Tibial artery (tissue), 4 donors: ENCODE measurements at regions of chr7 and their contacts with region 1.

Region 1: DNA sequence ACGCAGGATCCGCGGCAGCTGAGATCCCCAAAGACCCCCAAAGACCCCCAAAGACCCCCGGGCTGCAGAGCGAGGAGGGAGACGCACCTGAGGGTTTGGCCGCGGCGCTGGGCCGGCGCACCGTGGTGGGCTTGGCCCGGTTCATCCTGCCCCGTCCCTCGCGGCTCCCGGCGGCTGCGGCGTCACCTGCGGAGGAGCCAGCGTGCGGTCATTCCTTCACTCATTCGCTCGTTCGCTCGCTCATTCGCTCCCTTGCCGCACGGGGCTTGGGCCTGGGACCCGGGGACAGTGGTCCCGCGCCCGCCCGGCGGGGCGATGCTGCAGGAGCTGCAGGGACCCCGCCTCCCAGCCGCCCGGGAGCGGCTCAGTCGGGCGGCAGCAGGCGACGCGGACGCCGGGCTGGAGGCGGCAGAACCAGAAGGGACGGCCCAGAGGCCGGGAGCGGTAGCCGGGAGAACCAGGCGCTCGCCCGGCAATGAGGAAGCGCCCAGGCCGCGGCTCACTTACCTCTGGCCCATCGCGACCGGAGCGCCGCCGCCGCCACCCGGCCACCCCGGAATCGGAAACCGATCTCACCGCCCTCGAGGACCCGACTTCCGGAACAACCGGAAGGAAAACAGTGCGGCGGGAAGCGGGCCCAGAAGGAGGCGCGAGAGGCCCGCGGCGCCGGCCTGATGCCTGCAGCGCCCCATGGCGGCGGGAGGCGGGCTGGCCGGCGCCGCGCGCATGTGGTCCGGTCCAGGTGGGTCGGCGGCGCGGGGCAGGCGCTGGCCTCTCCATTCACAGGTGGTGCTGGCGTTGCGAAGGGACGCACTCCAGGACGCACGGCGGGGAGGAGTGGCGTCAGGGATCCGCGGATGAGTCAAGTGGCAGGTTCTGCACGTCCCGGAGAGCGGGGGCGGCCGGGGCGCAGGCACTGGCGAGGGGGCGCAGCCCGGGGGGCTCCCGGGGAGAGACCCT is at the start of gene INTS1:
- DNase-seq: peak; percentile 90 to 94
- H3K4me3 ChIP-seq: peak within 1 kb of the TSS; percentile 87 to 95
- H3K27ac ChIP-seq: peak within 1 kb of the TSS; percentile 74 to 75
- H3K4me1 ChIP-seq: peaks cover 0 to 39% (median 25%) of the 10 kb centered on the region in 4 donors
- H3K27me3 ChIP-seq: no peaks in the 10 kb centered on the region
- CTCF ChIP-seq: peak; percentile 86 to 94

Region 2: GRCh38 chr7:1537535-1538412 is 33.7 kb after region 1 on chr7:
- intact Hi-C with region 1: loop called (anchors 2 kb)
- DNase-seq: peak; percentile 95 to 99
- H3K4me3 ChIP-seq: peak overlapping the region; percentile 62 to 76
- H3K27ac ChIP-seq: peak overlapping the region; percentile 99 to 100
- H3K4me1 ChIP-seq: peaks cover 21 to 69% (median 54%) of the 10 kb centered on the region in 4 donors
- H3K27me3 ChIP-seq: no peaks in the 10 kb centered on the region
- CTCF ChIP-seq: no peak

Region 3: GRCh38 chr7:1569833-1570633 is 65.9 kb after region 1 on chr7 and contains the start of gene PSMG3:
- intact Hi-C with region 1: loop called (anchors 2 kb)
- DNase-seq: peak; percentile 88 to 94
- H3K4me3 ChIP-seq: peak within 1 kb of the TSS; percentile 79 to 88
- H3K27ac ChIP-seq: peak within 1 kb of the TSS; percentile 87 to 94
- H3K4me1 ChIP-seq: peaks cover 0 to 33% (median 22%) of the 10 kb centered on the region in 4 donors
- H3K27me3 ChIP-seq: no peaks in the 10 kb centered on the region
- CTCF ChIP-seq: peak; percentile 29 to 31

Region 4: GRCh38 chr7:1662101-1662500 is 158.0 kb after region 1 on chr7:
- intact Hi-C with region 1: no loop called
- DNase-seq: peak in 1 of 2 donors; percentile 52
- H3K4me3 ChIP-seq: no peak overlapping the region
- H3K27ac ChIP-seq: no peak overlapping the region
- H3K4me1 ChIP-seq: peaks cover 0 to 34% (median 27%) of the 10 kb centered on the region in 4 donors
- H3K27me3 ChIP-seq: peaks cover 0 to 66% of the 10 kb centered on the region in 2 donors
- CTCF ChIP-seq: no peak

Region 5: DNA sequence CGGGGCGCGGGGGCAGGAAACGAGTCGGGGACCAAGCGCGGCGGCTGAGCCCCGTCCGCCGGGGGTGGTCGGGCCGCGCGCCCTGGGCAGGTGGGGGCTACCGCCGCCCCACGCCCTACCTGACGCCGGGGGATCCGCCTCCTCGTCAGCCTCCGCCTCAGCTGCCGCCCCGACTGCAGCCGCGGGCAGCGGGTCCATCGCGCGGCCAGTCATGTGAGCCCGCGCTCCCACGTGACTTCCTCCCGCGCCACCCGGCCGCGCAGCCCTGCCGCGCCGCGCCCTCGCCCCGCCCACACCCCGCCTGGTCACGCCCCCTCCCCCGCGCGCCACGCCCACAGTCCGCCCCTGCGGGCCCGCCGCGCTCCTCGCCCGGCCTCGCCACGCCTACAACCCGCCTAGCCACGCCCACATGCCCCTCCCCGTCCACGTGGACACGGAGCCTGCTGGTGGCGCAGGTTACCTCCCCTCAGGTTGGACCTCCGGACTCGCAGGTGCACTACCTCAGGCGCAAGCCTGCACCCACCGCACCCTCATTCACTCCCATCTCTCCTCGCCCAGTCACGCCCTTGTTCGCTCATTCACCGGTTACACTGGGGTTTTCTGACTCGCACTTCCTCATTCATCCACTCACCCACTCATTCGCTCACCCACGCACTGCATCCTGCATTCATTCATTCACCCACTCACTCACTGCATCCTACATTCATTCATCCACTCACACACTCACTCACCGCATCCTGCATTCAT is 810.3 kb after region 1 on chr7 and contains the start of gene SNX8:
- intact Hi-C with region 1: loop called (anchors 5 kb)
- DNase-seq: peak; percentile 77 to 90
- H3K4me3 ChIP-seq: peak within 1 kb of the TSS; percentile 95
- H3K27ac ChIP-seq: peak within 1 kb of the TSS; percentile 76 to 77
- H3K4me1 ChIP-seq: peaks cover 0 to 10% (median 6%) of the 10 kb centered on the region in 4 donors
- H3K27me3 ChIP-seq: no peaks in the 10 kb centered on the region
- CTCF ChIP-seq: no peak